ENCODE measurements at regions of chr3 and their contacts with region 1.

Region 1: DNA sequence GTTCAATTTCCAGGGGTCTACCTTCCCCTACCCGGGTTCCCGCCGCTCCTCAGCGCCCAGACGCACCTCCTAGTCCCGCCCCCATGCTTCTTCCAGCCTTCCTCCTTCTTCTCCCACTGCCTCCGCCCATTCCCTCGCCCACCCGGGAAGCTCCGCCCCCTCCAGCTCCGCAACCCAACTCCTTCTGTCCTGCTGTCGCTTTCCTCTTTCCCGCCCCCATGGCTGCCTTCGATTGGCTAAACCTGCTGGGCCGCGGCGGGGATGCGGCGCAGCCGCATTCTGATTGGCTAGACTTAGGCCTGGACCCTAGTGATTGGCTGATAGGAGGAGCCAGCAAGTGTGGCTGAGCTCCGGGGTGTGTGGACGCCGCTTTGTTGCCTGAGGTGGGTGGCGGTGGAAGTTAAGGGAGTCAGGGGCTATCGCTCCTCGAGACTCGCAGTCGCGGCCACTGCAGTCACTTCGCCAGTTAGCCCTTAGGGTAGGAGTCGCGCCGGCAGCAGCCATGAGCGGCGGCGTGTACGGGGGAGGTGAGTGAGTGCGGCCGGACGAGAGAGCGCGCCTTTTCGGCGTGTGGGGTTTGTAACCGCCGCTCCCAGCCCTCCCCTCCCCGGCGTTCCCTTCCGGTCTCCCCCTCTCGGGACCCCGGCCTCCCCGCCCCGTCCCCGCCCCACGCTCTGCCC is at the start of gene ACTL6A:
- DNase-seq: peak; percentile 100
- H3K4me3 ChIP-seq: peak within 1 kb of the TSS; percentile 84
- H3K27ac ChIP-seq: peak within 1 kb of the TSS; percentile 38
- H3K4me1 ChIP-seq: peaks cover 24% of the 10 kb centered on the region
- H3K27me3 ChIP-seq: no peaks in the 10 kb centered on the region
- CTCF ChIP-seq: no peak
- total RNA-seq, gene ACTL6A: 87.9 and 113 TPM in 2 replicates

Region 2: GRCh38 chr3:178930116-178930515 is 632.6 kb before region 1 on chr3:
- CTCF ChIA-PET with region 1: no interaction called
- POLR2A ChIA-PET with region 1: no interaction called
- intact Hi-C with region 1: no loop called
- DNase-seq: no peak
- H3K4me3 ChIP-seq: no peak overlapping the region
- H3K27ac ChIP-seq: no peak overlapping the region
- H3K4me1 ChIP-seq: no peaks in the 10 kb centered on the region
- H3K27me3 ChIP-seq: no peaks in the 10 kb centered on the region
- CTCF ChIP-seq: no peak

Region 3: GRCh38 chr3:179015551-179016020 is 547.1 kb before region 1 on chr3:
- CTCF ChIA-PET with region 1: interaction called, 5 read pairs
- POLR2A ChIA-PET with region 1: no interaction called
- intact Hi-C with region 1: loop called (anchors 1 kb)
- DNase-seq: peak; percentile 67 to 76
- H3K4me3 ChIP-seq: no peak overlapping the region
- H3K27ac ChIP-seq: no peak overlapping the region
- H3K4me1 ChIP-seq: no peaks in the 10 kb centered on the region
- H3K27me3 ChIP-seq: no peaks in the 10 kb centered on the region
- CTCF ChIP-seq: peak; percentile 97

Region 4: DNA sequence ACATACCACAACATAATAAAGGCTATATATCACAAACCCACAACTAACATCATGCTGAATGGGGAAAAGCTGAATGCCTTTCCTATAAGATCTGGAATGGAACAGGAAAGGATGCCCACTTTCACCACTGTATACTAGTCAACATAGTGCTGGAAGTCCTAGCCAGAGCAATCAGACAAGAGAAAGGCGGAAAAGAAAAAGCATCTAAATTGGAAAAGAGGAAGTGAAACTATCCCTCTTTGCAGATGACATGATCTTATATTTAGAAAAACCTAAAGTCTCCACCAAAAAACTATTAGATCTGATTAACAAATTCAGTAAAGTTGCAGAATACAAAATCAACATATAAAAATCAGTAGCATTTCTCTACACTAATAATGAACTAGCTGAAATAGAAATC is 429.2 kb before region 1 on chr3:
- CTCF ChIA-PET with region 1: no interaction called
- POLR2A ChIA-PET with region 1: no interaction called
- intact Hi-C with region 1: no loop called
- DNase-seq: no peak
- H3K4me3 ChIP-seq: no peak overlapping the region
- H3K27ac ChIP-seq: no peak overlapping the region
- H3K4me1 ChIP-seq: peaks cover 4% of the 10 kb centered on the region; the same call in 1 of the 2 replicates
- H3K27me3 ChIP-seq: no peaks in the 10 kb centered on the region
- CTCF ChIP-seq: no peak

Region 5: GRCh38 chr3:179260949-179261765 is 301.6 kb before region 1 on chr3:
- CTCF ChIA-PET with region 1: no interaction called
- POLR2A ChIA-PET with region 1: no interaction called
- intact Hi-C with region 1: loop called (anchors 10 kb)
- DNase-seq: peak; percentile 65 to 88
- H3K4me3 ChIP-seq: peak overlapping the region; percentile 70
- H3K27ac ChIP-seq: no peak overlapping the region
- H3K4me1 ChIP-seq: peaks cover 5% of the 10 kb centered on the region
- H3K27me3 ChIP-seq: no peaks in the 10 kb centered on the region
- CTCF ChIP-seq: no peak

Region 6: DNA sequence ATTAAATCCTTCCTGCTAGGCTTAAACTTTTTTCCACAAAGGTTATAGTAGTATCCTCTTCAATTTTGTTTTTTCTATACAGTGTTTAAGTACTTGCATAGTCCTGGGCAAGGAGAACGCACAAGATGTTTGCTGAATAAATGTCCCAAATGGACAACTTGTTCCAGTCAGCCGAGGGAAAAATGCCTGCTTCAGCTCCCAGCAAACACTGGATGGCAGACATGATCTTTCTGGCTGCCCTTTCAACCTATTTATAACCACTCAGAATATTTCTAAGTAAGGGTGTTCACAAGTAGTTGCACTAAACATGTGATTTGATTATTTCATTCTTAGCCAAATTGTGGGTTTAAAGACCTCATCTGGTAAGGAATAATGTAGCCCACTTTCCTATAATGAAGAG is 141.2 kb before region 1 on chr3:
- CTCF ChIA-PET with region 1: no interaction called
- POLR2A ChIA-PET with region 1: no interaction called
- intact Hi-C with region 1: loop called (anchors 1 kb)
- DNase-seq: peak in 1 of 2 experiments; percentile 19
- H3K4me3 ChIP-seq: no peak overlapping the region
- H3K27ac ChIP-seq: no peak overlapping the region
- H3K4me1 ChIP-seq: no peaks in the 10 kb centered on the region
- H3K27me3 ChIP-seq: no peaks in the 10 kb centered on the region
- CTCF ChIP-seq: peak; percentile 50

Region 7: GRCh38 chr3:179451265-179452175 is 111.2 kb before region 1 on chr3 and contains the start of gene GNB4:
- CTCF ChIA-PET with region 1: no interaction called
- POLR2A ChIA-PET with region 1: interaction called, 11 read pairs
- intact Hi-C with region 1: loop called (anchors 1 kb)
- DNase-seq: peak; percentile 58 to 87
- H3K4me3 ChIP-seq: peak within 1 kb of the TSS; percentile 63
- H3K27ac ChIP-seq: no peak within 1 kb of the TSS
- H3K4me1 ChIP-seq: peaks cover 5% of the 10 kb centered on the region; the same call in 1 of the 2 replicates
- H3K27me3 ChIP-seq: 0 out of 2 replicates have a peak, but pooled peaks cover 3% of the 10 kb centered on the region
- CTCF ChIP-seq: no peak
- total RNA-seq, gene GNB4: 18.0 and 19.4 TPM in 2 replicates